ENCODE measurements at regions of chr12 and their contacts with region 1.

Region 1: DNA sequence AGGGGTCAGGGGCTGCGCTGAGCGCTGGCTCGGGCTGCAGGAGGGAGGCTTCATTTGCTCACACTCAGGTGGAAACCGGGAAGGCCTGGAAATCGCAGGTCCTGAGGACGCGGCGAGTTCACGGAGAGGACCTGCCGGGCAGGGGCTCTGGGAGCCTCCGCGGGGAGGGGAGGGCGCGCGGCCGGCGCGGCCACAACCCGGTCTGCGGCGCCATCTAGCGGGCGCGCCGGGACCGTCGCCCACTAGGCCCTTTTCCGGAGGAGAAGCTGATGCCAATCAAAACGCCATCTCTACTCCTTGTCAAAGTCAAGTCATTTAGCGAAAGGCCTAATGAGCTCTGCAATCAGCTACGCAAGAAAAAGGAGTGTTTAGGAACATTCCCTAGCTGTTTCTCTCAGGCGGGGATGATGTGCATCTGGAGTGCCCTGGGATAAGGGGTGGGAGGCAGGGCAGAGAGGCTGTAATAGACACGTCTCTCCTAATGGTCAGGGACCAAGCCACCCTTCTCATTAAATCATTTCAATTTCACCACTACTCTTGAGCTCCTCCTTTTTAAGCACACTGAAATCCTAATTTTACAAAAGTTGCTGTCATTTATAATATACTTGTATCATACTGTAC is 885.8 kb upstream of the TMEM132C start:
- DNase-seq: peak; percentile 43
- H3K4me3 Mint-ChIP-seq: peak overlapping the region; percentile 29
- H3K27ac Mint-ChIP-seq: no peak overlapping the region
- H3K4me1 Mint-ChIP-seq: peaks cover 12% of the 10 kb centered on the region
- H3K27me3 Mint-ChIP-seq: no peaks in the 10 kb centered on the region
- CTCF ChIP-seq: peak; percentile 87

Region 2: DNA sequence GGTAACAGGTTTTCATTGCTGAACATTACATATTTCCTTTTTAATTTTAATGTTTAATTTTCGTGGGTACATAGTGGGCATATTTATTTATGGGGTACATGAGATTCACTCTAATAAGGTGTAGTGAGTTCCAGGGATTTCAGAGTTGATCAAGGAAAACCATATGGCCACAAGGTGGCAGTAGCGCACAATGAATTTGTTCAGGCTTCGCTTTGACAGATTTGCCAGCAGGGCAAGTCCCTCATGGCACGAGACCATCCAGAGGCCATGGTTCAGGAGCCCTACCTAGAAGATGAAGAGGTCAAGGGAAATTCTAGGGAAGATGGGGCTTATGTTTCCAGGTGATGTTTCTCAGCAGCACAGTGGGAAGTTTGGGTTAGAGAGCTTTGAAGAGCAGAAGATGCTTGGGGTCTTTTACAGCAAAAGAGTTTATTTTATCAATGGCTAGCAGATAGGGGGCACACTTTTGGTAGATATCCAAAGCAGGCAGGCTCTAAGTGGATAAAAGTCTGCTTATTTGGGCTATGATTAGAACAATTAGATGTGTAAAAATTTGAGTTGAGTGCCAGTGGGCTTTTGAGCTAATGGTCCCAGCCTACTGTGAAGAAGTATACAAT is 1311.5 kb before region 1 on chr12:
- CTCF ChIA-PET with region 1: interaction called, 5 read pairs
- POLR2A ChIA-PET with region 1: no interaction called
- intact Hi-C with region 1: loop called (anchors 2 kb)
- DNase-seq: peak; percentile 82
- H3K4me3 Mint-ChIP-seq: no peak overlapping the region
- H3K27ac Mint-ChIP-seq: peak overlapping the region; percentile 8
- H3K4me1 Mint-ChIP-seq: no peaks in the 10 kb centered on the region
- H3K27me3 Mint-ChIP-seq: no peaks in the 10 kb centered on the region
- CTCF ChIP-seq: peak; percentile 74

Region 3: GRCh38 chr12:126874427-126875026 is 506.6 kb before region 1 on chr12:
- CTCF ChIA-PET with region 1: interaction called, 18 read pairs
- POLR2A ChIA-PET with region 1: interaction called, 3 read pairs
- intact Hi-C with region 1: loop called (anchors 1 kb)
- DNase-seq: peak; percentile 60
- H3K4me3 Mint-ChIP-seq: no peak overlapping the region
- H3K27ac Mint-ChIP-seq: no peak overlapping the region
- H3K4me1 Mint-ChIP-seq: no peaks in the 10 kb centered on the region
- H3K27me3 Mint-ChIP-seq: no peaks in the 10 kb centered on the region
- CTCF ChIP-seq: peak; percentile 94

Region 4: GRCh38 chr12:127150028-127150427 is 231.1 kb before region 1 on chr12:
- CTCF ChIA-PET with region 1: interaction called, 3 read pairs
- POLR2A ChIA-PET with region 1: no interaction called
- intact Hi-C with region 1: loop called (anchors 1 kb)
- DNase-seq: no peak
- H3K4me3 Mint-ChIP-seq: no peak overlapping the region
- H3K27ac Mint-ChIP-seq: no peak overlapping the region
- H3K4me1 Mint-ChIP-seq: no peaks in the 10 kb centered on the region
- H3K27me3 Mint-ChIP-seq: no peaks in the 10 kb centered on the region
- CTCF ChIP-seq: no peak

Region 5: DNA sequence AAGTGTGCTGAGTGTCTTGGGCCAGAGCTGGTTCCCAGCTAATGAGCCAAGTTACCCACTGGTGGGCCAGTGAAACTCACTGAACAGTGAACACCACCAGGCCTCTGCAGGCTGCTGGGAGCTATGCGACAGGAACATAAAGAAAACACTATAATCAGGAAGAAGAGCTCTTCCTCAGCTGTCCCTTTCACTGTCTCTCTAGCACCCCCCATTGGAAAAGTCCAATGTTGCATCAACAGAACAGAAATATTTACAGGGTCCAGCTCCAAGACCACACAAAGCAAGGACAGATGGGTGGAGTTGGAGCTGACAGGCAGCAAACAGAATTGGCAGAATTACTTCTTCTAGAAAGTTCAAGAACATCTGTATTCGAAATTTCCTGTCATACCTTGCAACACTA is 17.8 kb before region 1 on chr12:
- CTCF ChIA-PET with region 1: interaction called, 11 read pairs
- POLR2A ChIA-PET with region 1: no interaction called
- intact Hi-C with region 1: no loop called
- DNase-seq: peak; percentile 45
- H3K4me3 Mint-ChIP-seq: no peak overlapping the region
- H3K27ac Mint-ChIP-seq: no peak overlapping the region
- H3K4me1 Mint-ChIP-seq: no peaks in the 10 kb centered on the region
- H3K27me3 Mint-ChIP-seq: no peaks in the 10 kb centered on the region
- CTCF ChIP-seq: peak; percentile 24

Measured in MCF 10A (cell line).